ENCODE measurements at regions of chr6 and their contacts with region 1.

Region 1: GRCh38 chr6:83884523-83884922 is 25.0 kb downstream of the CYB5R4 start:
- DNase-seq: no peak
- ATAC-seq: peak; percentile 76
- H3K4me3 Mint-ChIP-seq: no peak overlapping the region
- H3K27ac Mint-ChIP-seq: no peak overlapping the region
- H3K4me1 Mint-ChIP-seq: peaks cover 45% of the 10 kb centered on the region
- H3K27me3 Mint-ChIP-seq: no peaks in the 10 kb centered on the region
- CTCF ChIP-seq: no peak

Region 2: DNA sequence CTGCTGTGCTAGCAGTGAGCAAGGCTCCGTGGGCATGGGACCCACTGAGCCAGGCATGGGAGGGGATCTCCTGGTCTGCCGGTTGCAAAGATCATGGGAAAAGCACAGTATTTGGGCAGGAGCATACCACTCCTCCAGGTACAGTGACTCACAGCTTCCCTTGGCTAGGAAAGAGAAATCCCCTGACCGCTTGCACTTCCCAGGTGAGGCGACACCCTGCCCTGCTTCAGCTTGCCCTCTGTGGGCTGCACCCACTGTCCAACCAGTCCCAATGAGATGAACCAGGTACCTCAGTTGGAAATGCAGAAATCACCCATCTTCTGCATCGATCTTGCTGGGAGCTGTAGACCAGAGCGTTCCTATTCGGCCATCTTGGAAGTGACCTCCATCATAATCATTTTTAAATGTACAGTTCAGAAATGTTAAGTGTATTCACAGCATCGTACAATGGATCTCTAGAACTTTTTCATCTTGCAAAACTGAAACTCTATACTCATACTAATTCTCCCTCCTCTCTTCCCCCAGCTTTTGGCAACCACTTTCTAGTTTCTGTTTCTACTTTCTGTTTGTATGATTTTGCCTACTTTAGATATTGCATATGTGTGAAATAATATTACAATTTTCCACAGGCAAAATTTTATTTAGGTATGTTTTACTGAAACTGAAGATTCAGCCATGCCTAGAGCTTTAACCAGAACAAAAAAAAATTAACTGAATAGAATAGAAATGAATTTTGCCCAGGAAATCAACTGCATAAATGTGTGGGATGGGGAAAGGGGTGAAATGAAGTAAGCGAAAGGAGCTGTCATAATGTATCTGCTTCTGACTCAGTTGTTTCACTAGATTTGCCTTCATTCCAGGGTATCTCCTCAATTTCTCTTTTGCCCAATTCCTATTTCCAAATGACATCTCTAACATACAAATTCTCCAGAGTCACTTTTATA is 591.4 kb before region 1 on chr6:
- CTCF ChIA-PET with region 1: no interaction called
- POLR2A ChIA-PET with region 1: no interaction called
- intact Hi-C with region 1: no loop called
- DNase-seq: no peak
- ATAC-seq: no peak
- H3K4me3 Mint-ChIP-seq: no peak overlapping the region
- H3K27ac Mint-ChIP-seq: no peak overlapping the region
- H3K4me1 Mint-ChIP-seq: no peaks in the 10 kb centered on the region
- H3K27me3 Mint-ChIP-seq: peaks cover 3% of the 10 kb centered on the region
- CTCF ChIP-seq: no peak

Region 3: GRCh38 chr6:84220809-84221409 is 336.4 kb after region 1 on chr6:
- CTCF ChIA-PET with region 1: interaction called, 21 read pairs
- POLR2A ChIA-PET with region 1: no interaction called
- intact Hi-C with region 1: loop called (anchors 1 kb)
- DNase-seq: no peak
- ATAC-seq: no peak
- H3K4me3 Mint-ChIP-seq: no peak overlapping the region
- H3K27ac Mint-ChIP-seq: no peak overlapping the region
- H3K4me1 Mint-ChIP-seq: peaks cover 5% of the 10 kb centered on the region
- H3K27me3 Mint-ChIP-seq: no peaks in the 10 kb centered on the region
- CTCF ChIP-seq: peak; percentile 35

Region 4: DNA sequence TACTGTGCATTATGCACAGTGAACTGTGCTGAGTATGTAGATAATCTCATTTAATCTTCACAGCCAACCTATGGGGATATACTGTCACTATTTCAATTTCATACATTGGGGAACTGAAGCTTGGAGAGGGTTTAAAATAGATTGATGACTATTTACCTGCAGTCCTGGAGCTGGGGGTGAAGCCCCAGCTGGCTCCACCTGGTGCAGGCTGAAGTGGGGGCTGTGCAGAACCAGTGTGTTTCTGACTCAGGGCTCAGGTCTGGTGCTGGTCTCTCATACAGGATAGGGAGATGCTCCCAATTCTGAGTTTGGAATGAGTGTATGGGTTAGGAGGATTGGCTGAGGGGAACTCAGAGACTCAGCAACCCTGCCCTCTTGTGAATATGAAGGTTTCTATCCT is 519.0 kb after region 1 on chr6:
- CTCF ChIA-PET with region 1: no interaction called
- POLR2A ChIA-PET with region 1: no interaction called
- intact Hi-C with region 1: no loop called
- DNase-seq: no peak
- ATAC-seq: no peak
- H3K4me3 Mint-ChIP-seq: no peak overlapping the region
- H3K27ac Mint-ChIP-seq: no peak overlapping the region
- H3K4me1 Mint-ChIP-seq: no peaks in the 10 kb centered on the region
- H3K27me3 Mint-ChIP-seq: no peaks in the 10 kb centered on the region
- CTCF ChIP-seq: no peak

Region 5: GRCh38 chr6:84764332-84765049 is 880.0 kb after region 1 on chr6 and contains the start of gene TBX18:
- CTCF ChIA-PET with region 1: no interaction called
- POLR2A ChIA-PET with region 1: no interaction called
- intact Hi-C with region 1: loop called (anchors 10 kb)
- DNase-seq: no peak
- ATAC-seq: no peak
- H3K4me3 Mint-ChIP-seq: peak within 1 kb of the TSS; percentile 33
- H3K27ac Mint-ChIP-seq: no peak within 1 kb of the TSS
- H3K4me1 Mint-ChIP-seq: peaks cover 12% of the 10 kb centered on the region
- H3K27me3 Mint-ChIP-seq: peaks cover 59% of the 10 kb centered on the region
- CTCF ChIP-seq: no peak
- total RNA-seq, gene TBX18: not detected in 2 replicates

Measured in activated B cell treated with CpG ODN at 0.5 μM for 24 hours (primary cell).